WTC11 (cell line): ENCODE measurements at regions of chr11 and their contacts with region 1.

Region 1: DNA sequence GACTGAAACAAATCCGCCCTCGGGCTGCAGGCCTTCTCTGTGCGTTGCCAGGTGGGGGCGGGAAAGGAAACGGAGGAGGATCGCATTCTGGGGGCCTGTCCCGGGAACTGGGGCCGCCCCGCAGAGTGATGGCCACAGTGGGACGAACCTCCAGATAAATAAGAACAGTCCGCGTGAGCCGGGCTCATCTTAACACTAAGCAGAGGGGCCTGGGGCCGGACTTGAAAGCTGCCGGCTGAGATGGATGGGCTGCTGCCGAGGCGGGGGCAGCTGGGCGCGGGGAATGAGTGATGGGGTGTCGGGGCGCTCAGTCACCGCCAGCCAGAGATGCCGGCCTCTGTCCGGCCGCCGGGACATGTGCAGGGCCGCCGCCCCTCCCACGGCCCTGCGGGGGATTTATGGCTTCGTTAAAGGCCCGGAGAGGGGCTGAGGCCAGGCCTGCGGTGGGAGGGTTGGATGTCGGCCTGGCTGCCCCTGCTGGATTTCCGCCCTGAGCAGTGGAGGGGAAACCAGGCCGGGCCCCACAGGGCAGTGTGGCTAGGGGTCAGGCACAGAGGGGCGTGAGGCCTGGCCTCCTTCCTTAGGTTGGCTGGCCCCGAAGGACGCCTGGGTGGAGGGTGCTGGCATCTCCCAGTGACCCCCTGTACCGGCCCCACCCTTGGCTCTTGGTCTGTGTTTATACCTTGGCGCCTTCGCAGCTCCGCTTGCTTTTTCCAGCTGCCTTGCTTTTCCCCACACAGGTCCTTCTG is 45.3 kb upstream of the CD82 start:
- DNase-seq: no peak
- ATAC-seq: peak; percentile 38
- H3K4me3 Mint-ChIP-seq: no peak overlapping the region
- H3K27ac Mint-ChIP-seq: no peak overlapping the region
- H3K4me1 Mint-ChIP-seq: peaks cover 11% of the 10 kb centered on the region
- H3K27me3 Mint-ChIP-seq: peaks cover 4% of the 10 kb centered on the region; the same call in 1 of the 2 replicates
- CTCF ChIP-seq: no peak

Region 2: GRCh38 chr11:44427432-44427831 is 92.7 kb before region 1 on chr11:
- CTCF ChIA-PET with region 1: interaction called, 10 read pairs
- POLR2A ChIA-PET with region 1: no interaction called
- DNase-seq: peak; percentile 83
- ATAC-seq: peak; percentile 93
- H3K4me3 Mint-ChIP-seq: no peak overlapping the region
- H3K27ac Mint-ChIP-seq: no peak overlapping the region
- H3K4me1 Mint-ChIP-seq: peaks cover 11% of the 10 kb centered on the region
- H3K27me3 Mint-ChIP-seq: peaks cover 3% of the 10 kb centered on the region
- CTCF ChIP-seq: peak; percentile 74

Region 3: GRCh38 chr11:44538375-44539054 is 18.4 kb after region 1 on chr11:
- CTCF ChIA-PET with region 1: interaction called, 21 read pairs
- POLR2A ChIA-PET with region 1: no interaction called
- DNase-seq: peak; percentile 85
- ATAC-seq: peak; percentile 92
- H3K4me3 Mint-ChIP-seq: peak overlapping the region; percentile 24
- H3K27ac Mint-ChIP-seq: no peak overlapping the region
- H3K4me1 Mint-ChIP-seq: peaks cover 13% of the 10 kb centered on the region
- H3K27me3 Mint-ChIP-seq: peaks cover 8% of the 10 kb centered on the region
- CTCF ChIP-seq: peak; percentile 97

Region 4: DNA sequence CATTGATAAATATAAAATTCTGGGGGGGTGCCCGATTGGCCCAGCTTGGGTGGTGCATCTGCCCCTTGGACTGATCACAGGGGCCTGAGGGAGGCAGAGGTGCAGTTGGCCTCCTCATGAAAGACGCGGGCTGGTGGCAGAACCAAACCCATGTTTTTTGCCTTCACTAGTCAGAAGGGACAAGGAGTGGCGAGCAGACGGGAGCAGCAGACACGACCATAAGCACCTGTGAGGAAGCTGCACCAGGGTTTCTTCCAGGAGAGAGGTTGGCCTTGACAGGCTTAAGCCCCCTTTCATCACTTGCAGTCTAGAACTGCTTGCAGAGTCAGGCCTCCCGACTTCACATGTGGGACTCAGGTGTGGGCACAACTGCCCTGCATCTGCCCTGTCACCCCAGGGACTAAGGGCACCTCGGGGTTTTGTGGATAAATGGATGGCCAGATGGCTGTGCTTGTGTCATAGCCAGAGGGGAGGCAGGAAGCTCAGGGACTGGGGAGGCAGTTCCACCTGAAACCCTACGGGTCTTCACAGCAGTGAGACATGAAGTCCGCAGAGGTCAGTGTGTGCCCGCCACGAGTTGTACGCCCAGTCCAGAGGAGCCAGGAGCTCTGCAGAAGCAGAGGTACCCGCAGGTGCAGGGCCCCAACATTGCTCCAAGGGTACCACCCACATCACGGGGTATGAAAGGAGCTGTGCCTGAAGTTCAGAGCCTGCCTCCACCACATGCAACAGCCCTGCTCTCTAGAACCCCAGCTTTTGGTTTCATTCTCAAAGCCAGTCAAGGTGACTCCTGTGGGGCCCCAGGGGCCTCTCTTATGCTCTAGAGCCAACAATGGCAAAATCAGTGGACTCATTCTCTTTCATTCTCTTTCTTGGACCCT is 784.2 kb after region 1 on chr11:
- CTCF ChIA-PET with region 1: no interaction called
- POLR2A ChIA-PET with region 1: no interaction called
- DNase-seq: no peak
- ATAC-seq: no peak
- H3K4me3 Mint-ChIP-seq: no peak overlapping the region
- H3K27ac Mint-ChIP-seq: no peak overlapping the region
- H3K4me1 Mint-ChIP-seq: peaks cover 10% of the 10 kb centered on the region; the same call in 1 of the 2 replicates
- H3K27me3 Mint-ChIP-seq: peaks cover 83% of the 10 kb centered on the region
- CTCF ChIP-seq: no peak